Uterus (tissue), 4 donors: ENCODE measurements at regions of chr1 and their contacts with region 1.

Region 1: DNA sequence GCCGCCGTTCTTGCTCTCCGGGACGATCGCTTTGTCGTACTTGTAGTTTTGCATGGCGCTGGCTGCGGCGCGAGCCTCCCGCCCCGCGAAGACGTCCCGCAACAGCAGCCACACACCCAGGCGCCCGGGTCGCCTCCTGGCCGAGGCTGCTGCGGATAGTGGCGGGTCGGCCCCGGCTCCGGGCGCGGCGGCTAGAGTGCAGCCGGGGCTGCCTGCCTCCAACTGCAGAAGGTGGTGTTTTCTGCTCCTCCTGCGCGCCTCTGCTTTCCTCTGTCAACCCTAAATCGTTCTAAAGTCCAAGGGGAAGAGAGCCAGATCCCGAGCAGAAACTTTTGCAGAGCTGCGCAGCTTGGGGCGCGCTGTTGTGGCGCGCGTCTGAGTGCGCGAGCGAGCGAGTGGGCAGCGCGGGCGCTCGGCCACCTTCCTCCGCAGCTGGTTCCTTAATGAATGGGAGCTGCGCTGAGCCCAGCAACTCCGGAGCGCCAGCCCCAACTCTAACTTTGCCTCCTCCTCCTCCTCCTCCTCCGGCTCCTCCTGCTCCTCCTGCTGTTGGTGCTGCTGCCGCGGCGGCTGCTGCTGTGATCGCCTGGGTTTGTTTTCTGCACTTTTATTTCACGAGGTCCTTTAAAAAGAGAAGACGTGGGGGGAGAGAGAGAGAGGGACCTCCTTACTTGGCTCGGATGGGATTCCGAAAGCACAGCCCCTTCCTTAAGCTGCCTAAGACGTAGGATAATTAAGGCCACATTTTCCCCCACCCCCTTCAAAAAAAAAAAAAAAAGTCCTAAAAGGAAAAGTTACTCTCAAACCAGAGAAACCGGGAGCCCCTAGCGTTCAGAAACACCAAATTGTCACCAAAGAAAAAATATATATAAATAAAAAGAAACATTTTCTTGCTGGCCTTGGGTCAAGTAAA is at the start of gene PLPP3:
- DNase-seq: peak; percentile 83 to 90
- H3K4me3 ChIP-seq: peak within 1 kb of the TSS; percentile 76 to 77
- H3K27ac ChIP-seq: peak within 1 kb of the TSS; percentile 92 to 99
- H3K4me1 ChIP-seq: no peaks in the 10 kb centered on the region
- H3K27me3 ChIP-seq: no peaks in the 10 kb centered on the region
- CTCF ChIP-seq: peak; percentile 30 to 68 (median 44)
- POLR2A ChIP-seq: peak; percentile 83 to 88
- total RNA-seq, gene PLPP3: 76.3 to 315 (median 140) TPM

Region 2: DNA sequence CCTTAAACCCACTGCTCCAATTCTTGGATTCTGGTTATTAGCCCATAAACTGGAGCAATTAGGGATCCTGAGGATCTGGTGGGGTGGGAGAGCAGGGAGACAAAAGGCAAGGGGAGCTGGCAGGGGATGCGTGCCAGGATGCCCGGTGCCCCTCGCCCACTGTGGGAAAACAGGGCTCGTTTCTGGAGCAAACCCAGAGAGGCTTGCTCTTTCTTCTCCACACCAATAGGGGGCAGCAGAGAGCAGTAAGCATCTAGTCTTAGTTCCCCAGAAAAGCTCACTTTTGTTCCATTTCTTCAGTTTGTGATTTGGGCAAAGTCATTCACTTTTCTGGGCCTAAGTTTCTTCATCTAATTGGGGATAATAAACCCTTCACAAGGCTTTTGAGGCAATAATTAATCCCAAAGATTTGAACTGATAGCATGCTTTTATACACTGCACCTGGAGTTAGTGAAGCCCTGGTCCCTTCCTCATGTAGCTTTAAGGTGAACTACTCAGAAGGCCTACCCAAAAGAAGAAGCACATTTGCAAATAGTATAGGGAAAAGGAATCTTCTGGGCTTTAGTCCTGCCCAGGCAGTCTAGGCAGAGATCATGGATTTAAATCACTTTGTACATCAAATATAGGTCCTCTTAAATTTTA is 1203.5 kb before region 1 on chr1:
- intact Hi-C with region 1: loop called (anchors 10 kb)
- DNase-seq: peak; percentile 34 to 46
- H3K4me3 ChIP-seq: no peak overlapping the region
- H3K27ac ChIP-seq: peak overlapping the region in 1 of 2 donors; percentile 60
- H3K4me1 ChIP-seq: no peaks in the 10 kb centered on the region
- H3K27me3 ChIP-seq: no peaks in the 10 kb centered on the region
- CTCF ChIP-seq: peak; percentile 70 to 86 (median 78)
- POLR2A ChIP-seq: no peak

Region 3: DNA sequence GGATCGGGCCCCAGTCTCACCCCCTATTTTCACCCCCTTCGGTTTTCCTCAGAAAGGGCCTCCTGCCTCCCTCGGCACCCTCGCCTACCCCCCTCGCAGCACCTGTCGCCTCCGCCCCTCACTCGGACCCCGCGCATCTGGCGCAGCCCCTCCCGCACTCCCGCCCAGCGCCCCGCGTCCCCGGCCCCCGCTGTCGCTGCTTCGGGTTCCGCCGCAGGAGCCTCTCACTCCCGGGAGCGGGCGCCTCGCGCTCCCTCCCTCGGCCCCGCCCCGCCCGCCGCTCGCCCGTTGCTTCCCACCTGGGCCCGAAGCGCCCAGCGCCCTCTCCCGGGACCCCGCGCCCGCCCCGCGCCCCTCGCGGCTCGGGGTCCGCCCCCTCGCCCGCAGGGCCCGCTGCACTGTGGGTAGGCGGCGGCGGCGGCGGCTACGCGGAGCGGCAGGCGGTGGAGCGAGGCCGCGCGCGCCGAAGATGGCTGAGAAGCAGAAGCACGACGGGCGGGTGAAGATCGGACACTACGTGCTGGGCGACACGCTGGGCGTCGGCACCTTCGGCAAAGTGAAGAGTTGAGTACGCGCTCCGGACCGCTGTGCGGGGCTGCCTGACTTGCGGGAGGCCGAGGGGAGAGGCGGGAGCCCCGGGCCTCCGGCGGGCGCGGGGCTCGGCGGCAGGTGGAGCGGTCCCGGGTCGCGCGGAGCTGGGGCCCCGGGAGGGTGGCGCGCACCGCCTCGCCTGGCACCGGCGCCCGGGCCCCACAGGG is 65.9 kb after region 1 on chr1 and contains the start of gene PRKAA2:
- intact Hi-C with region 1: no loop called
- DNase-seq: peak; percentile 27 to 33
- H3K4me3 ChIP-seq: peak within 1 kb of the TSS; percentile 44 to 68
- H3K27ac ChIP-seq: peak within 1 kb of the TSS; percentile 50 to 71
- H3K4me1 ChIP-seq: no peaks in the 10 kb centered on the region
- H3K27me3 ChIP-seq: no peaks in the 10 kb centered on the region
- CTCF ChIP-seq: no peak
- POLR2A ChIP-seq: peak in 1 of 2 donors; percentile 52
- total RNA-seq, gene PRKAA2: 2.8 to 10.0 (median 7.4) TPM